ENCODE measurements at regions of chr2 and their contacts with region 1.

Region 1: DNA sequence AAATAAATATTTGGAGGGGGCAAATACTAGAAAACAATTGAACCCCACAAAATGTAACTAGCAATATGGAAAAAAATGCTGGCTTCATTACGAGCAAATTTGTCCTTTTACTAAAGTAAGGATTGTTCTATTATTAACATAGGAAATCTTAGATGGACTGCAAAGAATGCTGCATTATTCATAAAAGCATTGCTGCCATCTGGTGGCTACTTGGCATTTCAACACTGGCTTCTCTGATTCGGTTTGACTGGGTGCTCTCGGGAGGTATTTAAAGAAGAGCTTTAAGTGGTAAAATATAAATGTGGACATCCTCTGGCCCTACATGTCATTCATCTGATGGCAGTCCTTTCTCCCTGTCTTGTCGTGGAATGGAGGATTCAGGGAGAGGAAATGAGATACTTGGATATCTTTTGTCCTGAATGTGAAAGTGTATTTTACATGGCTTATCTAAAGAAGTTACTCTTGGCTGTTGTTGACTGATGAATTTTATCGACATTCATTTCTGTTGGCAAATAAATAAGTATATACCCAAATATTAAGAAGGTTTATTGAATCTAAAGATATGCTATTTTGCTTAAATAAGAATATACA is 130.2 kb downstream of the ARHGAP15 start:
- DNase-seq: peak; percentile 25 to 76 (median 69)
- ATAC-seq: peak; percentile 63
- H3K4me3 ChIP-seq: peak overlapping the region; percentile 29
- H3K4me3 Mint-ChIP-seq: peak overlapping the region in 9 of 10 donors; percentile 77 to 90 (median 84)
- H3K27ac ChIP-seq: peak overlapping the region; percentile 49
- H3K27ac Mint-ChIP-seq: peak overlapping the region; percentile 51 to 98 (median 93)
- H3K4me1 ChIP-seq: peaks cover 68 to 75% of the 10 kb centered on the region in 2 donors
- H3K4me1 Mint-ChIP-seq: peaks cover 39 to 88% (median 84%) of the 10 kb centered on the region in 7 donors
- H3K27me3 ChIP-seq: no peaks in the 10 kb centered on the region
- H3K27me3 Mint-ChIP-seq: no peaks in the 10 kb centered on the region

Region 2: DNA sequence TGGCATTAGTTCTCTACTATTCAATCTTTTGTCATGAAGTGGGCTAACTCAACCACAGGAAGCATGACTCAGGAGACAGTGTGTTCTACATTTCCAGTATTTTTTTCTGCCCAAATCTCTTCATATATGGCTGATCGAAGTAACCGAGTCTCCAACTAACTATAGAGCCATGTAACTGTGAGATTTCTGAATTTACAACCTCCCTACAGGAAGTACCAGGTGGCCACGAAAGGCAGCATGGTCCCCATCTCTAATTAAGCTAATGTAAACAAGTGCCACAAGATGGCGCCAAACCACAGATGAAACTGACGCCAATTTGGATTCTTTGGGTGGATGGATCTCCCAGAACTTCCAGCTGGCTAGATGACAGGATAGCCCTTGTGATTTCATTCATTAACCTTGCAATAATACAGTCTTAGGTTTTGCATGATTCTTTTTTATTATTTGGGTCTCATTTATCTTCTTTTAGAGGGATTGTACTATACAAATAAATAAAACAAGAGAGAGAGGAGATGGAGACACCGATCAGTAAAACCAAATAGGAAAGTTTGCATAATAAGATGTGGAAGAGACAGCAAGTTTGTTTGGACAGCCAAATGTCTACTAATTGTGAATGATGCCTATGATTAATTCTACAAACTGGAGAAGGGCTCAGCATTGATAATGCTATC is 148.6 kb before region 1 on chr2:
- CTCF ChIA-PET with region 1: interaction called, 79 read pairs
- POLR2A ChIA-PET with region 1: interaction called, 15 read pairs
- intact Hi-C with region 1: loop called (anchors 1 kb)
- DNase-seq: peak; percentile 18 to 70 (median 61)
- ATAC-seq: peak; percentile 90
- H3K4me3 ChIP-seq: no peak overlapping the region
- H3K4me3 Mint-ChIP-seq: peak overlapping the region in 4 of 10 donors; percentile 10 to 69 (median 60)
- H3K27ac ChIP-seq: no peak overlapping the region
- H3K27ac Mint-ChIP-seq: peak overlapping the region in 7 of 9 donors; percentile 17 to 83 (median 71)
- H3K4me1 ChIP-seq: peaks cover 0 to 20% of the 10 kb centered on the region in 2 donors
- H3K4me1 Mint-ChIP-seq: peaks cover 9 to 45% (median 38%) of the 10 kb centered on the region in 7 donors
- H3K27me3 ChIP-seq: no peaks in the 10 kb centered on the region
- H3K27me3 Mint-ChIP-seq: peaks cover 0 to 7% (median 6%) of the 10 kb centered on the region in 5 donors

Region 3: DNA sequence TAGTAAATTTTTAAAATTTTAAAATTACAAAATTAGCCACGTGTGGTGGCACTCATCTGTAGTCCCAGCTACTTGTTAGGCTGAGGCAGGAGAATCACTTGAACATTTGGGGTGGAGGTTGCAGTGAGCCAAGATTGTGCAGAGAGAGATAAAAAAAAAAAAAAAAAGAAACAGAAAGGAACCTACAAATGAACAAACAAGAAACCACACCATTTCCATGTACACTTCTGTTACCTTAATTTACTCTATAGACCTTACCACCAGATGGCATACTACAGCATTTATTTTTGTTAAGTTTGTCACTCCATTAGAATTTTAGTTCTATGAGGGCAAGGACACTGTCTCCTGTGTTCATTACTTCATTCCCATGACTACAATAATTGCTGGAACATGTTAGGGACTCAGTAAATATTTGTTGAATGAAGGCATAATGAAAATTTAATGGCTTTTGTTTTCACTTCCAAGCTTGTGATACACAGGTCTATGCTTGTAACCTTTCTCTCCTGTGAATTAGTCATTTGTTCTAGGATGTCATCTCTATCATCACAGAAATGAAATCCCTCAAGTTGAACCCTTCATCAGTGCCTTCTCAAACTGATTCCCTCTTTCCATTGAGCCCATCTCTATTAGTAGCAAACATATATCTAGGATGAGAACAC is 54.2 kb before region 1 on chr2:
- CTCF ChIA-PET with region 1: interaction called, 20 read pairs
- POLR2A ChIA-PET with region 1: interaction called, 5 read pairs
- intact Hi-C with region 1: loop called (anchors 1 kb)
- DNase-seq: peak in 7 of 9 donors; percentile 13 to 58 (median 44)
- ATAC-seq: peak; percentile 77
- H3K4me3 ChIP-seq: no peak overlapping the region
- H3K4me3 Mint-ChIP-seq: peak overlapping the region in 6 of 10 donors; percentile 0 to 58 (median 16)
- H3K27ac ChIP-seq: no peak overlapping the region
- H3K27ac Mint-ChIP-seq: peak overlapping the region in 8 of 9 donors; percentile 10 to 90 (median 58)
- H3K4me1 ChIP-seq: peaks cover 28 to 34% of the 10 kb centered on the region in 2 donors
- H3K4me1 Mint-ChIP-seq: peaks cover 30 to 85% (median 78%) of the 10 kb centered on the region in 7 donors
- H3K27me3 ChIP-seq: no peaks in the 10 kb centered on the region
- H3K27me3 Mint-ChIP-seq: no peaks in the 10 kb centered on the region

Region 4: GRCh38 chr2:143241403-143242088 is 17.9 kb before region 1 on chr2:
- CTCF ChIA-PET with region 1: interaction called, 26 read pairs
- POLR2A ChIA-PET with region 1: interaction called, 7 read pairs
- intact Hi-C with region 1: loop called (anchors 1 to 2 kb)
- DNase-seq: no peak
- ATAC-seq: no peak
- H3K4me3 ChIP-seq: no peak overlapping the region
- H3K4me3 Mint-ChIP-seq: peak overlapping the region in 1 of 10 donors; percentile 14
- H3K27ac ChIP-seq: no peak overlapping the region
- H3K27ac Mint-ChIP-seq: peak overlapping the region; percentile 6 to 67 (median 42)
- H3K4me1 ChIP-seq: peaks cover 10 to 16% of the 10 kb centered on the region in 2 donors
- H3K4me1 Mint-ChIP-seq: peaks cover 9 to 50% (median 42%) of the 10 kb centered on the region in 7 donors
- H3K27me3 ChIP-seq: no peaks in the 10 kb centered on the region
- H3K27me3 Mint-ChIP-seq: no peaks in the 10 kb centered on the region

Region 5: DNA sequence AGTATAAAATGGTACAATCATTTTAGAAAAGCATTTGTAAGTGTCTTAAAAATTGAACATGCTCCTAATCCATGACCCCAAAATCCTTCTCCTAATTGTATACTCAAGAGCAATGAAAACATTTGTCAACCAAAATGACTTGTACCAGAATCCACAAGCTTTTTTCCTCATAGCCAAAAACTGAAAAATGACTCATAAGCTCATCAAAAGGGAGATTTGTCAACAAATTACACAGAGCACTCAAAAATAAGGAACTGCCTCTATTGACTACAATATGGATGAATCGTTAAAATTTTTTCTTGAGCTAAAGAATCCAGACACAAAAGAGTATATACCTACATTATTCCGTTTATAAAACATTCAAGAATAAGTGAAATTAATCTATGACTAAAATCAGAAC is 414.6 kb after region 1 on chr2:
- CTCF ChIA-PET with region 1: no interaction called
- POLR2A ChIA-PET with region 1: no interaction called
- intact Hi-C with region 1: no loop called
- DNase-seq: no peak
- ATAC-seq: no peak
- H3K4me3 ChIP-seq: no peak overlapping the region
- H3K4me3 Mint-ChIP-seq: no peak overlapping the region
- H3K27ac ChIP-seq: no peak overlapping the region
- H3K27ac Mint-ChIP-seq: peak overlapping the region in 1 of 9 donors; percentile 27
- H3K4me1 ChIP-seq: no peaks in the 10 kb centered on the region
- H3K4me1 Mint-ChIP-seq: peaks cover 7 to 48% (median 24%) of the 10 kb centered on the region in 7 donors
- H3K27me3 ChIP-seq: no peaks in the 10 kb centered on the region
- H3K27me3 Mint-ChIP-seq: no peaks in the 10 kb centered on the region

Region 6: DNA sequence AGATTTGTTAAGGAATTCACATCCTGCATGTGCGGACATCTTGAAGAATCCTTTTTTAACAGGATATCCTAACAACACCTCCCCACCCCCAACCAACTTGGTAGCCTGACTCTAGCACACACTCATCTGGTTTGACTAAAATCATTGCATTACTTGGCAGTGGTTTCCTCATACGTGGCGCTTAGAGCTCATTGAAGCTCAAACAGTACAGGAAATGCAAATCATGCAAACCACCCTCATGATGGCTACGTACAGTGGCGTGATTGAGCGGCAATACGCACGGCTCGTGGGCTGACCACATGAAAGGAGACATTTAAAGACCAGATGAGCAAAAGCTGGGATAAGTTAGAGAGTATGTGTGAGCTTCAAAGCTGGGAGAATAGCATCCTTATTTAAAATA is 924.3 kb after region 1 on chr2:
- CTCF ChIA-PET with region 1: no interaction called
- POLR2A ChIA-PET with region 1: no interaction called
- intact Hi-C with region 1: loop called in 1 of 2 experiments (anchors 10 kb)
- DNase-seq: peak; percentile 12 to 78 (median 71)
- ATAC-seq: peak; percentile 98
- H3K4me3 ChIP-seq: no peak overlapping the region
- H3K4me3 Mint-ChIP-seq: peak overlapping the region; percentile 37 to 87 (median 79)
- H3K27ac ChIP-seq: no peak overlapping the region
- H3K27ac Mint-ChIP-seq: peak overlapping the region in 8 of 9 donors; percentile 8 to 89 (median 60)
- H3K4me1 ChIP-seq: peaks cover 9 to 30% of the 10 kb centered on the region in 2 donors
- H3K4me1 Mint-ChIP-seq: peaks cover 9 to 26% (median 13%) of the 10 kb centered on the region in 7 donors
- H3K27me3 ChIP-seq: no peaks in the 10 kb centered on the region
- H3K27me3 Mint-ChIP-seq: no peaks in the 10 kb centered on the region

Measured in naive thymus-derived CD4-positive, alpha-beta T cell (primary cell).